Activated CD4-positive, alpha-beta memory T cell treated with anti-CD3 and anti-CD28 coated beads for 36 hours (primary cell): ENCODE measurements at regions of chr16 and their contacts with region 1.

Region 1: GRCh38 chr16:352547-353403 is at the start of gene AXIN1:
- DNase-seq: peak; percentile 100
- H3K4me3 Mint-ChIP-seq: peak within 1 kb of the TSS; percentile 81
- H3K27ac Mint-ChIP-seq: peak within 1 kb of the TSS; percentile 77
- H3K4me1 Mint-ChIP-seq: peaks cover 44% of the 10 kb centered on the region
- H3K27me3 Mint-ChIP-seq: no peaks in the 10 kb centered on the region
- total RNA-seq, gene AXIN1: 18.6 to 20.5 TPM

Region 2: DNA sequence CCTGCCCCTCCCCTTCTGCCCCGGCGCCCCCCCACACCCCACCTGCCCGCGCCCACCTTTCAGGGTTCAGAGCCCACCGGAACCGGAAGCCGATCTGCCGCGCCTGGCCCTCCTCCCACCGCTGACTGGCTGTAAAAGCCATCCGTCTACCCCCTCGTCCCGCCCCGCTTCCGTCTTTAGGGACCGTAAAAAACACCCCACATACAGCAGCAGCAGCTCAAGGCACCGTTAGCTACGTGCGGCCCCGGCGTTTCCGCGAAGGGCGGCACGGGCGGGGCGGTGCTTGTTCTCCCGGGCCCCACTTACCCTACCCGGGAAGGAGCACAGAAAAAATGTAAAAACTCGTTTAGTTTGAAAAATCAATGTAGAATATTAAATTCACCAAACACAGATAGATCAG is 17.7 kb after region 1 on chr16 and contains the start of gene MRPL28:
- CTCF ChIA-PET with region 1: no interaction called
- POLR2A ChIA-PET with region 1: no interaction called
- intact Hi-C with region 1: loop called (anchors 2 kb)
- DNase-seq: peak; percentile 97
- H3K4me3 Mint-ChIP-seq: peak within 1 kb of the TSS; percentile 85
- H3K27ac Mint-ChIP-seq: peak within 1 kb of the TSS; percentile 85
- H3K4me1 Mint-ChIP-seq: peaks cover 11% of the 10 kb centered on the region
- H3K27me3 Mint-ChIP-seq: no peaks in the 10 kb centered on the region
- total RNA-seq, gene MRPL28: 76.8 to 77.3 TPM

Region 3: GRCh38 chr16:401468-402348 is 48.9 kb after region 1 on chr16 and contains the start of gene DECR2:
- CTCF ChIA-PET with region 1: no interaction called
- POLR2A ChIA-PET with region 1: no interaction called
- intact Hi-C with region 1: loop called (anchors 2 kb)
- DNase-seq: peak; percentile 99
- H3K4me3 Mint-ChIP-seq: peak within 1 kb of the TSS; percentile 84
- H3K27ac Mint-ChIP-seq: peak within 1 kb of the TSS; percentile 82
- H3K4me1 Mint-ChIP-seq: peaks cover 18% of the 10 kb centered on the region
- H3K27me3 Mint-ChIP-seq: no peaks in the 10 kb centered on the region
- total RNA-seq, gene DECR2: 8.5 to 8.8 TPM

Region 4: DNA sequence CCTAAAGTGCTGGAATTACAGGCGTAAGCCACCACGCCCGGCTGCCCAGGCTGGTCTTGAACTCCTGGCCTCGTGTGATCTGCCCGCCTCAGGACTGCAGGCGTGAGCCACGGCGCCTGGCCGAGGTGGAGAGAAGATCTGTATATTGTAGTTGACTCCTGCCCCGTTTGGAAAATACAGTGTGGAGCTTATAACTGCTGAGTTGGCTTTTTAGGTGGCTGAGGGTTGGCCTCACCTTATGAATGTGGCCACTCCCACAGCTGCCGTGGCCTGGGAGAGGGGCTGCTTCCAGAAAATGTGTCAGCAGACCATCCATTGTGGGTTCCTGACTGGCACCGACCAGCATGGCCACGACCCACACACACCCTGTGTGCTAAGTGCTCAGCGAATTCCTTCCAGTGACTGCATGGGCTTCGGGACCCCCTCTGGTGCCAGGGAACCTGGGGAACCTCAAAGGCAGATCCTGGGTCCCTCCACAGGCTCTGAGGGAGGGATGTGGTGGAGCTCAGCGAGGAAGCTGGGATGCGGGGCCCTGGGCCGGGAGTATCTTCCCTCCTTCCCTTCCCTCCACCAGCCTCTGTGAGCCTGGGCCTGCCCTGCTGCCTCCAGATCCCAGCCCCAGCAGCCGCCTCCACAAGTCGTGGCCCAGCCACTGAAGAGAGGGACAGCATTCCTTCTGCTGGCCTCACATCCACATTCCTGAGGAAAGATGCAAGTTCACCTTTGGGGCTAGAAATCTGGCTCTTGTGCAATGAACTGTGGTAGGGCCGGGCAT is 61.8 kb after region 1 on chr16:
- CTCF ChIA-PET with region 1: no interaction called
- POLR2A ChIA-PET with region 1: no interaction called
- intact Hi-C with region 1: no loop called
- DNase-seq: no peak
- H3K4me3 Mint-ChIP-seq: no peak overlapping the region
- H3K27ac Mint-ChIP-seq: no peak overlapping the region
- H3K4me1 Mint-ChIP-seq: no peaks in the 10 kb centered on the region
- H3K27me3 Mint-ChIP-seq: no peaks in the 10 kb centered on the region